OCI-LY7 (cell line): ENCODE measurements at regions of chr4 and their contacts with region 1.

Region 1: GRCh38 chr4:85717351-85717750 is 242.4 kb downstream of the ARHGAP24 start:
- DNase-seq: peak; percentile 24
- H3K4me3 ChIP-seq: no peak overlapping the region
- H3K27ac ChIP-seq: peak overlapping the region; percentile 8
- H3K4me1 ChIP-seq: peaks cover 52% of the 10 kb centered on the region
- CTCF ChIP-seq: no peak

Region 2: GRCh38 chr4:85672116-85672515 is 45.2 kb before region 1 on chr4:
- CTCF ChIA-PET with region 1: no interaction called
- POLR2A ChIA-PET with region 1: interaction called, 10 read pairs
- intact Hi-C with region 1: no loop called
- DNase-seq: peak; percentile 12
- H3K4me3 ChIP-seq: no peak overlapping the region
- H3K27ac ChIP-seq: no peak overlapping the region
- H3K4me1 ChIP-seq: peaks cover 32% of the 10 kb centered on the region
- CTCF ChIP-seq: no peak

Region 3: GRCh38 chr4:85686398-85686797 is 31.0 kb before region 1 on chr4:
- CTCF ChIA-PET with region 1: interaction called, 3 read pairs
- POLR2A ChIA-PET with region 1: interaction called, 12 read pairs
- intact Hi-C with region 1: no loop called
- DNase-seq: peak; percentile 29
- H3K4me3 ChIP-seq: no peak overlapping the region
- H3K27ac ChIP-seq: no peak overlapping the region
- H3K4me1 ChIP-seq: peaks cover 11% of the 10 kb centered on the region
- CTCF ChIP-seq: peak; percentile 52; the same call in 1 of the 2 replicates